ENCODE measurements at regions of chr13 and their contacts with region 1.

Region 1: DNA sequence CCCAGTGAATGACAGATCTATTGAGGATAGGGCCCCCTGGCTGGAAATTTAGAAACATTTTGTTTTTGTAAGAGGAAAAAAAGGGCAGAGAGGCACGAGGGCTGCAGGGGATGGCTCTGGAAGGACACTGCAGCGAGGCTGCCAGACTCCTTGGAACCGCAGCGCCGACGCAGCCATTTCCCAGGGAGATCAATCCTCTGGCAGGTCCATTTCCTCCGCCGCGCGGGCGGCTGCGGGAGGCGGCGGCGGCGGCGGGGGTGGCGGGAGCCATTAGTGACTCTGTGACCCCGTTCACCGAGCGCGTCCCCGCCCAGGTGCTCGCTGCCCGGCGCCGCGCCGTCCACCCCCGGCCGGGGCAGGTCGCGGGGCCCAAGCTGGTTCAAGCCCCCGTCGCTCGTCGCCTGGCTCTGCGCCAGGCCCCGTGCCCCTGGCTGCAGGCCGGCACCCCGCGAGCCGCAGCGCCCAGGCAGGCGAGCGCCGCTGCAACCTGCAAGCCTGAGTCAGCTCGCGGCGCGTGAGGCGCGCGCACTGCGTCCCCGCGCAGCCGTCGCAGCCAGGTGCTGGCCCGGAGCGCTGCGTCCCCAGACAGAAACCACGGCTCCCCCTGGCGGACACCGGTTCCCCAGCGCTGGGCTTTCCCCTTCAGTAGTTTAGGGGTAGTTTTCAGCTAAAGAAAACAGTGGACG is 192.6 kb downstream of the KATNAL1 start:
- H3K4me3 ChIP-seq: peak overlapping the region; percentile 46
- H3K27ac ChIP-seq: peak overlapping the region; percentile 38; the same call in 1 of the 2 replicates
- H3K4me1 ChIP-seq: peaks cover 5% of the 10 kb centered on the region; the same call in 1 of the 2 replicates
- CTCF ChIP-seq: peak; percentile 76

Region 2: GRCh38 chr13:29508130-29508875 is 606.4 kb before region 1 on chr13:
- CTCF ChIA-PET with region 1: interaction called, 12 read pairs
- POLR2A ChIA-PET with region 1: no interaction called
- H3K4me3 ChIP-seq: no peak overlapping the region
- H3K27ac ChIP-seq: no peak overlapping the region
- H3K4me1 ChIP-seq: no peaks in the 10 kb centered on the region; the same call in 1 of the 2 replicates
- CTCF ChIP-seq: peak; percentile 59

Region 3: DNA sequence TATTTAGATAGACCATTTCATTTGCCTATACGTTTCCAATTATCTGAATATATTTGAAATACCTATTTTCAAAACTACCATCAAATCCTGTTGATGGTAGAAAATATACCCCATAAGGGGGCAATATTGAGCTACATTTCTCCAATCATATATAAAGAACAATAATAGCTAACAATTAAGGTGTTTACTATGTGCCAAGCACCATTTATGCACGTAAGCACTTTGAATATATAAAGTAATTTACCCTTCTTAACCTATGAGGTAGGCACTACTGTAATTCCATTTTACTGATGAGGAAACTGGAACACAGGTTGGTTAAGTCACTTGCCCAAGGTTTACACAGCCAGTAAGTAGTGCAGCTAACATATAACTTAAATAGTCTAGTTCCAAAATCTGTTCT is 343.5 kb before region 1 on chr13:
- CTCF ChIA-PET with region 1: interaction called, 55 read pairs
- POLR2A ChIA-PET with region 1: no interaction called
- H3K4me3 ChIP-seq: no peak overlapping the region
- H3K27ac ChIP-seq: no peak overlapping the region
- H3K4me1 ChIP-seq: no peaks in the 10 kb centered on the region
- CTCF ChIP-seq: no peak

Region 4: GRCh38 chr13:29850224-29850898 is 264.4 kb before region 1 on chr13 and contains the start of gene UBL3:
- CTCF ChIA-PET with region 1: interaction called, 24 read pairs
- POLR2A ChIA-PET with region 1: interaction called, 5 read pairs
- H3K4me3 ChIP-seq: peak within 1 kb of the TSS; percentile 81
- H3K27ac ChIP-seq: peak within 1 kb of the TSS; percentile 88
- H3K4me1 ChIP-seq: peaks cover 5% of the 10 kb centered on the region
- CTCF ChIP-seq: no peak

Region 5: DNA sequence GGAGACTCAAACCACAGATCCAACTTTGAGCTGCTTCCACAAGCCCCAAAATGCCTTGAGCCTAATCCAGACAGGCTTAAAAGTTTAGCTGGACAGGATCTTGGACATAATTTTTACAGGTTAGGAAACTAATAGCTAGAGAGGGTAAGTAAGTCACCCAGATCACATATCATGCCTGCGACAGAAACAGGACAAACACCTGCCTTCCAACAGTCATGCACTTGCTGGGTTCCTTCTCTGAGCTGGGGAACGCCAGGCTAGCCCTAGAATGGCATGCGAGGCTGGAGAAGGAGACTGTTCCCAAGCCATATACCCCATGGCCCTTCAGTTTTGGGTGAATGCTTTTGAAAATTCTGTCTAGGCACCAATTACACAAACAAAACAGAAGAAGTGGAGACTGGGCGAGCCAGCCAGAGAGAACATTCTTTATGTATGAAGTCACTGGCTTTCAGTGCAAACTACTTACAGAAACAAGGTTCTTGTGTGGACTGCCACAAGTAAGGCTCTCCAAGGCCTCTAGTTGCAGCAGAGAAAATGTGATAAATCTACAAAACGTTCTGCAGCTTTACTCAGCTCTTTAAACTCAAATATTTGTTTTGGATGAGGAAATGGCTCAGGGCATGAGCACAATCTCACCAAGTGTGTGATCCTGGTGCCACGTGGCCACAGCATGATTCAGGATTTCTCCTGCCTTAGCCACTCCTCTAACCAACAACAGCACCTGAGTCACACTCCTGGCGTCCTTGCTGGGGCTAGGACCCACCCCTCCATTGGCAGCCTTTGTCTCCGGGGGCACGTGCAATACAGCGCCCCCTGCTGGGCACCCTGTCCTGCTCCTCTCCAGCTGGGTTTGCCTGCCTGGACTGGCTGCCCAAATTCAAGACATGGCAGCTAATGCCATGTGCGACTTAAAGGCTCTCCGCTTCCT is 190.9 kb before region 1 on chr13:
- CTCF ChIA-PET with region 1: interaction called, 17 read pairs
- POLR2A ChIA-PET with region 1: interaction called, 3 read pairs
- H3K4me3 ChIP-seq: no peak overlapping the region
- H3K27ac ChIP-seq: peak overlapping the region; percentile 81
- H3K4me1 ChIP-seq: peaks cover 13% of the 10 kb centered on the region
- CTCF ChIP-seq: peak; percentile 76

Region 6: GRCh38 chr13:30091691-30092090 is 23.0 kb before region 1 on chr13:
- CTCF ChIA-PET with region 1: no interaction called
- POLR2A ChIA-PET with region 1: no interaction called
- H3K4me3 ChIP-seq: no peak overlapping the region
- H3K27ac ChIP-seq: no peak overlapping the region
- H3K4me1 ChIP-seq: no peaks in the 10 kb centered on the region
- CTCF ChIP-seq: no peak

Region 7: DNA sequence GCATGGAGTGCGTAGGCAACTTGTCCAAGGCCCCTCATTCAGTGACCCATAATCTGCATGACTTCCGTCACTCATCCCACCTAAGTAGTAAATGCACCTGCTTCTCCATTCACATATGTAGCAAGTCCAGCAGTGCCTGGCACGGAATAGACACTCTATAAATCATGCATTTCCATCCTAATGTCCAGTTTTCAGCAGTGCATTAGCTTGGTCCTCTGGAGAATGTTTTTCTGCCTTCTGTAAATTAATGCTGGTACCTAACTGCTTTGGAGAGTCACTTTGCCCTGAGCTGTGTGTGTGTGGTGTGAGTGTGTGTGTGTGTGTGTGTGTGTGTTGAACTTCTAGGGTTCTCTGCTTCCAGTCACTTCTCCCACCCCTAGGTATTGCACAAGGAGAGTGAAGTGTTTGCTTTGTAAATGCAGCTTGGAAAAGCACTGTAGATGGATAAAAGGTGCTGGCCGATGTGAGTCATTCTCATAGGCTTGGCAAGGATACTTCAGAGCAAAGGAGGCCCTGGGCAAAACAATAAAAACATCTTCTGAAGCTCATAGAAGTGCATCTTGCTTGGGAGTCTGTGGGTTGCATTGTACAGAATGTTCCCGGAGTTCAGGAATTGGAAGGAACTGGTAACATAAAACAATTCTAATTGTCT is 10.8 kb after region 1 on chr13:
- CTCF ChIA-PET with region 1: interaction called, 16 read pairs
- POLR2A ChIA-PET with region 1: no interaction called
- H3K4me3 ChIP-seq: no peak overlapping the region
- H3K27ac ChIP-seq: no peak overlapping the region
- H3K4me1 ChIP-seq: no peaks in the 10 kb centered on the region; the same call in 1 of the 2 replicates
- CTCF ChIP-seq: no peak

Region 8: DNA sequence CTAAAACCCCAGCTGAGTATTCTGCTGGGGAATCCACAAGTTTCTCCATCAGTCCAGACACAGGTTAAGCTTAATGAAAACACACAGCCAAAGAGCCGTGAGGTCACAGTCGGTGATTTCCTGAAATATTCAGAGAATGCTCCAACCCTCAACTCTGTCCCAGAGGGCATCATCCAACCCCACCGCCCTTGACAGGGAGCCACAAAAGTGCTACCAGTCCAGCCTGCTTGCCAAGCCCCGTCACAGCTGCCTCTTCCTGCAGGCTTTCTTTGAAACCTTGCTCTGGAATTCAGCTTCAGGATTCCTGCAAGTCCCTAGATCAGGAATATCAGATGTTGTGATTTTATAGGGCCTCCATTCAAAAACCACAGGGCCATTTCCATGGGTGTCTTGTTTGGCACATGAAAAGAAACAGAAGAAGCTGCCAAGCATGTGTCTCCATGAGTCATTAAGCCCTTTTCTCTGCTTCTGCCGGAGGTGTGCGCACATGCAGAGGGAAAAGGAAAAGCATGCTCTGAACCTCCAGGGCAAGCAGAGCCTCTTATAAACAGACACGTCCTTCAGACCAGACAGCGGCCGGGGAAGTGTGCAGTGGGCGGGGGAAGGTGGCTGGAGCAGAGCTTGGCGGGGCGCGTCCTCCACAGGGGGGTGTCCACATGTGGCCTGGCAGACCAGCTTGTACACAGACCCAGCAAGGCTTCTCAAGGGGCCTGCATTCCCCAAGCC is 27.9 kb after region 1 on chr13:
- CTCF ChIA-PET with region 1: no interaction called
- POLR2A ChIA-PET with region 1: no interaction called
- H3K4me3 ChIP-seq: no peak overlapping the region
- H3K27ac ChIP-seq: no peak overlapping the region
- H3K4me1 ChIP-seq: no peaks in the 10 kb centered on the region
- CTCF ChIP-seq: no peak

Region 9: GRCh38 chr13:30301827-30302226 is 187.1 kb after region 1 on chr13:
- CTCF ChIA-PET with region 1: no interaction called
- POLR2A ChIA-PET with region 1: no interaction called
- H3K4me3 ChIP-seq: no peak overlapping the region
- H3K27ac ChIP-seq: no peak overlapping the region
- H3K4me1 ChIP-seq: peaks cover 5% of the 10 kb centered on the region; the same call in 1 of the 2 replicates
- CTCF ChIP-seq: no peak

Region 10: DNA sequence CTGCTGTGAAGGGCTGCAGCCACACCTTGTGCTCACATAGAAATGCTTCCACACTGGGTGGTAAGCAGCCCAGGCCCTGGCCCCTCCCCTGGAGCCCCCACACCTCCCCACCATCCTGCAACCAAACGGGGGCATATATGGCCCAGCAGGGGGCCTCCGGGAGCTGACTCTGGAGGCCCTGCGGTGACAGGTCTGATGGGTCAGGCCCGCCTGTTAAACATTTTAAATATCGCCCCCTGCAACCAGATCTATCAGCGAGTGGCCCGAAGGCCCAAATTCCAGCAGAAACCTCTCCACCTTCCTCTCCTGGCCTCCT is 240.6 kb after region 1 on chr13:
- CTCF ChIA-PET with region 1: no interaction called
- POLR2A ChIA-PET with region 1: no interaction called
- H3K4me3 ChIP-seq: no peak overlapping the region
- H3K27ac ChIP-seq: no peak overlapping the region
- H3K4me1 ChIP-seq: no peaks in the 10 kb centered on the region
- CTCF ChIP-seq: no peak